Activated B cell treated with CpG ODN at 0.5 μM for 24 hours (primary cell): ENCODE measurements at regions of chr9 and their contacts with region 1.

Region 1: GRCh38 chr9:92986176-92987085 is 39.1 kb downstream of the FGD3 start:
- DNase-seq: no peak
- ATAC-seq: peak; percentile 50
- H3K4me3 Mint-ChIP-seq: no peak overlapping the region
- H3K27ac Mint-ChIP-seq: peak overlapping the region; percentile 77
- H3K4me1 Mint-ChIP-seq: peaks cover 56% of the 10 kb centered on the region
- H3K27me3 Mint-ChIP-seq: no peaks in the 10 kb centered on the region
- CTCF ChIP-seq: peak; percentile 55

Region 2: GRCh38 chr9:92686954-92687353 is 299.5 kb before region 1 on chr9:
- CTCF ChIA-PET with region 1: no interaction called
- POLR2A ChIA-PET with region 1: no interaction called
- intact Hi-C with region 1: no loop called
- DNase-seq: no peak
- ATAC-seq: no peak
- H3K4me3 Mint-ChIP-seq: no peak overlapping the region
- H3K27ac Mint-ChIP-seq: no peak overlapping the region
- H3K4me1 Mint-ChIP-seq: peaks cover 6% of the 10 kb centered on the region
- H3K27me3 Mint-ChIP-seq: no peaks in the 10 kb centered on the region
- CTCF ChIP-seq: no peak

Region 3: GRCh38 chr9:92954049-92954861 is 32.2 kb before region 1 on chr9:
- CTCF ChIA-PET with region 1: interaction called, 9 read pairs
- POLR2A ChIA-PET with region 1: no interaction called
- intact Hi-C with region 1: loop called (anchors 1 kb)
- DNase-seq: no peak
- ATAC-seq: peak; percentile 66
- H3K4me3 Mint-ChIP-seq: peak overlapping the region; percentile 49
- H3K27ac Mint-ChIP-seq: no peak overlapping the region
- H3K4me1 Mint-ChIP-seq: peaks cover 20% of the 10 kb centered on the region
- H3K27me3 Mint-ChIP-seq: peaks cover 17% of the 10 kb centered on the region
- CTCF ChIP-seq: no peak